ENCODE measurements at regions of chr9 and their contacts with region 1.

Region 1: GRCh38 chr9:15163931-15164330 is 143.1 kb downstream of the TTC39B start:
- DNase-seq: no peak
- H3K4me3 ChIP-seq: no peak overlapping the region
- H3K27me3 ChIP-seq: no peaks in the 10 kb centered on the region
- CTCF ChIP-seq: no peak

Region 2: GRCh38 chr9:15142878-15143534 is 20.9 kb before region 1 on chr9:
- CTCF ChIA-PET with region 1: interaction called, 10 read pairs
- POLR2A ChIA-PET with region 1: no interaction called
- DNase-seq: no peak
- H3K4me3 ChIP-seq: no peak overlapping the region
- H3K27me3 ChIP-seq: peaks cover 4% of the 10 kb centered on the region; the same call in 1 of the 2 replicates
- CTCF ChIP-seq: peak; percentile 87

Measured in BJ (cell line).